GM12878 (cell line): ENCODE measurements at regions of chr12 and their contacts with region 1.

Region 1: GRCh38 chr12:62435303-62436163 is 31.1 kb upstream of the MON2 start:
- DNase-seq: no peak
- ATAC-seq: peak; percentile 87
- H3K4me3 ChIP-seq: peak overlapping the region; percentile 60
- H3K27ac ChIP-seq: no peak overlapping the region
- H3K4me1 ChIP-seq: peaks cover 14% of the 10 kb centered on the region
- H3K27me3 ChIP-seq: 0 out of 4 replicates have a peak, but pooled peaks cover 0 to 1% of the 10 kb centered on the region in 2 experiments
- CTCF ChIP-seq: peak; percentile 48 to 54 (median 53); a peak in 5 of 6 replicates
- EP300 ChIP-seq: no peak
- POLR2A ChIP-seq: no peak
- RAD21 ChIP-seq: peak; percentile 30

Region 2: GRCh38 chr12:62466594-62467491 is 31.3 kb after region 1 on chr12 and contains the start of gene MON2:
- CTCF ChIA-PET with region 1: interaction called, 22 read pairs
- POLR2A ChIA-PET with region 1: no interaction called
- RAD21 ChIA-PET with region 1: interaction called, 5 read pairs
- SMC1A ChIA-PET with region 1: interaction called, 7 read pairs
- in situ Hi-C with region 1: no loop called
- intact Hi-C with region 1: no loop called
- DNase-seq: peak; percentile 41
- ATAC-seq: peak; percentile 99
- H3K4me3 ChIP-seq: peak within 1 kb of the TSS; percentile 87
- H3K27ac ChIP-seq: peak within 1 kb of the TSS; percentile 91
- H3K4me1 ChIP-seq: no peaks in the 10 kb centered on the region
- H3K27me3 ChIP-seq: no peaks in the 10 kb centered on the region
- CTCF ChIP-seq: no peak
- EP300 ChIP-seq: no peak
- POLR2A ChIP-seq: peak; percentile 98
- RAD21 ChIP-seq: no peak
- polyA plus RNA-seq, gene MON2: 5.4 to 5.9 TPM

Region 3: GRCh38 chr12:62484233-62484632 is 48.7 kb after region 1 on chr12:
- CTCF ChIA-PET with region 1: no interaction called
- POLR2A ChIA-PET with region 1: no interaction called
- RAD21 ChIA-PET with region 1: no interaction called
- SMC1A ChIA-PET with region 1: no interaction called
- in situ Hi-C with region 1: no loop called
- intact Hi-C with region 1: no loop called
- DNase-seq: no peak
- ATAC-seq: peak; percentile 53
- H3K4me3 ChIP-seq: no peak overlapping the region
- H3K27ac ChIP-seq: peak overlapping the region; percentile 34; the same call in 1 of the 2 replicates
- H3K4me1 ChIP-seq: no peaks in the 10 kb centered on the region; the same call in 1 of the 2 replicates
- H3K27me3 ChIP-seq: no peaks in the 10 kb centered on the region
- CTCF ChIP-seq: no peak
- EP300 ChIP-seq: no peak
- POLR2A ChIP-seq: no peak
- RAD21 ChIP-seq: no peak

Region 4: GRCh38 chr12:62783881-62784280 is 348.3 kb after region 1 on chr12:
- CTCF ChIA-PET with region 1: interaction called, 12 read pairs
- POLR2A ChIA-PET with region 1: no interaction called
- RAD21 ChIA-PET with region 1: interaction called, 3 read pairs
- SMC1A ChIA-PET with region 1: no interaction called
- in situ Hi-C with region 1: no loop called
- intact Hi-C with region 1: no loop called
- DNase-seq: no peak
- ATAC-seq: no peak
- H3K4me3 ChIP-seq: no peak overlapping the region
- H3K27ac ChIP-seq: no peak overlapping the region
- H3K4me1 ChIP-seq: no peaks in the 10 kb centered on the region; the same call in 1 of the 2 replicates
- H3K27me3 ChIP-seq: no peaks in the 10 kb centered on the region
- CTCF ChIP-seq: no peak
- EP300 ChIP-seq: no peak
- POLR2A ChIP-seq: no peak
- RAD21 ChIP-seq: no peak

Region 5: DNA sequence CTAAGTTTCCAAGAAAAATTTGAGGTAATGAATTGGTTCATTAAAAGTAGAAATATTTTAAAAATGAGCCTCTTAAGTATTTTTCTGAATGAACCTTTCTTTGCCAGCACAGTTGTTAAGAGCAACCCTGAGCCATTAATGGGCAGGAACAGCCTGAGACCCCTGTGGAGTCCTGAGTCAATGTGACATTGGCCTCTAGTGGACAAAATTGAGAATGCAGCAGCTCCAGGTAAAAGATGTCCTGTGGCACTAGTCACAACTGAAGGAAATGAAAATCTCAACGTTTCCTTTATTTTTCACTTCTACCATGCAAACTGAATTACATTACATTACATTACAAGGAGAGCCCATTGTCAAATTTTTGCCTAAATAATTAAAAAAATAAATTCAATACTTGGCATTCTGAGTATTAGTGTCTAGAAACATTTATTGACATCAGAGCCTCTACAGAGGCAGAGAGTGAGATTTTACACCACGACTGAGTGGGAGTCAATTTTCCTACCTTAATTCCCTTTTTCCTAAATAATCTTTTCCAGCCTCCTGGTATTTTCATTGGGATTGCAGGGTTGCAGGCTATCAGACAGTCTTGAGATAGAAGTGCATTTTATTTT is 363.7 kb after region 1 on chr12:
- CTCF ChIA-PET with region 1: interaction called, 169 read pairs
- POLR2A ChIA-PET with region 1: no interaction called
- RAD21 ChIA-PET with region 1: interaction called, 57 read pairs
- SMC1A ChIA-PET with region 1: interaction called, 112 read pairs
- in situ Hi-C with region 1: loop called (anchors 5 kb)
- intact Hi-C with region 1: loop called (anchors 1 kb)
- DNase-seq: no peak
- ATAC-seq: peak; percentile 97
- H3K4me3 ChIP-seq: no peak overlapping the region
- H3K27ac ChIP-seq: no peak overlapping the region
- H3K4me1 ChIP-seq: no peaks in the 10 kb centered on the region; the same call in 1 of the 2 replicates
- H3K27me3 ChIP-seq: no peaks in the 10 kb centered on the region
- CTCF ChIP-seq: peak; percentile 94 to 98 (median 96); a peak in 5 of 6 replicates
- EP300 ChIP-seq: no peak
- POLR2A ChIP-seq: no peak
- RAD21 ChIP-seq: peak; percentile 97

Region 6: DNA sequence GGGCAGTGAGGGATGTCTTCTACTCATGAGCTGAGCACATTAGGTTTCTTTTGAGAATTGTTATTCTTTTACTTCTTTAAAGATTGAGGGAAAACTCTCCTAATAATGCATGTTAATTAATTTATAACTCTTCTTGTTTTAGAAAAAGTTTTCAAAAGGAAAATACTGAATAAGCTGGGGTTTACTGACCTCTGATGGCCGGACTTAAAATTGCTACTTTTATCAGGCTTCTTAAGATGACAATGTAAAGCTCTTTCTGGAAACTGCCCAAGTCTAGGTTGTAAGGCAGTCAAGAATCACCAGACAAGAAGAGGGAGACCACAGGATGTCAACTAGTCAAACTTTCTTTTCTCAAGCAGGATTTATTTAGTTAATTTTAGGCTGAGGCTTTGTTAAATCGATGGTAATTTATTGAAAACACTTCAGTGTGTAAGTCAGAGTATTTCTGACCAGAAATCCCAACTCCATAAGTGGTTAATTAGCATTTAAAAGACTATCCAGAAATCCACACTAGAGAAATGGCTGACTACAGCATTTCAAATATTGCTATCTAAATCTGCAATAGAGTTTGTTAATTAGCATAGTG is 633.4 kb after region 1 on chr12:
- CTCF ChIA-PET with region 1: interaction called, 10 read pairs
- POLR2A ChIA-PET with region 1: no interaction called
- RAD21 ChIA-PET with region 1: interaction called, 5 read pairs
- SMC1A ChIA-PET with region 1: no interaction called
- in situ Hi-C with region 1: loop called (anchors 25 kb)
- intact Hi-C with region 1: no loop called
- DNase-seq: no peak
- ATAC-seq: peak; percentile 55; the same call in 2 of the 3 replicates
- H3K4me3 ChIP-seq: no peak overlapping the region
- H3K27ac ChIP-seq: no peak overlapping the region
- H3K4me1 ChIP-seq: no peaks in the 10 kb centered on the region
- H3K27me3 ChIP-seq: no peaks in the 10 kb centered on the region
- CTCF ChIP-seq: peak; percentile 33 to 48 (median 36); a peak in 3 of 6 replicates
- EP300 ChIP-seq: no peak
- POLR2A ChIP-seq: no peak
- RAD21 ChIP-seq: peak; percentile 59; the same call in 1 of the 2 replicates